ENCODE measurements at regions of chr11 and their contacts with region 1.

Region 1: GRCh38 chr11:50220651-50221050 is 188.0 kb downstream of the OR4C45 start:
- DNase-seq: no peak
- ATAC-seq: no peak
- H3K4me3 ChIP-seq: no peak overlapping the region
- H3K27ac ChIP-seq: no peak overlapping the region
- H3K4me1 ChIP-seq: no peaks in the 10 kb centered on the region
- H3K27me3 ChIP-seq: no peaks in the 10 kb centered on the region

Region 2: GRCh38 chr11:50037251-50037650 is 183.4 kb before region 1 on chr11:
- intact Hi-C with region 1: no loop called
- DNase-seq: no peak
- ATAC-seq: no peak
- H3K4me3 ChIP-seq: no peak overlapping the region
- H3K27ac ChIP-seq: no peak overlapping the region
- H3K4me1 ChIP-seq: no peaks in the 10 kb centered on the region
- H3K27me3 ChIP-seq: no peaks in the 10 kb centered on the region

Region 3: GRCh38 chr11:50275179-50275578 is 54.5 kb after region 1 on chr11:
- intact Hi-C with region 1: loop called in 1 of 4 experiments (anchors 10 kb)
- DNase-seq: no peak
- ATAC-seq: no peak
- H3K4me3 ChIP-seq: no peak overlapping the region
- H3K27ac ChIP-seq: no peak overlapping the region
- H3K4me1 ChIP-seq: no peaks in the 10 kb centered on the region
- H3K27me3 ChIP-seq: no peaks in the 10 kb centered on the region